Dendritic cell treated with granulocyte-macrophage colony-stimulating factor and Interleukin-4, amounts not matched to agents 40 ng/mL and 50 ng/mL, for 4 days (primary cell): ENCODE measurements at regions of chr17 and their contacts with region 1.

Region 1: GRCh38 chr17:44919885-44920564 is 4.7 kb upstream of the GFAP start:
- H3K4me3 Mint-ChIP-seq: no peak overlapping the region
- H3K27ac Mint-ChIP-seq: no peak overlapping the region
- H3K4me1 Mint-ChIP-seq: peaks cover 18% of the 10 kb centered on the region
- H3K27me3 Mint-ChIP-seq: peaks cover 29% of the 10 kb centered on the region

Region 2: GRCh38 chr17:45021607-45022287 is 101.7 kb after region 1 on chr17:
- intact Hi-C with region 1: loop called (anchors 1 kb)
- H3K4me3 Mint-ChIP-seq: peak overlapping the region; percentile 69
- H3K27ac Mint-ChIP-seq: peak overlapping the region; percentile 46
- H3K4me1 Mint-ChIP-seq: peaks cover 35% of the 10 kb centered on the region
- H3K27me3 Mint-ChIP-seq: peaks cover 43% of the 10 kb centered on the region

Region 3: DNA sequence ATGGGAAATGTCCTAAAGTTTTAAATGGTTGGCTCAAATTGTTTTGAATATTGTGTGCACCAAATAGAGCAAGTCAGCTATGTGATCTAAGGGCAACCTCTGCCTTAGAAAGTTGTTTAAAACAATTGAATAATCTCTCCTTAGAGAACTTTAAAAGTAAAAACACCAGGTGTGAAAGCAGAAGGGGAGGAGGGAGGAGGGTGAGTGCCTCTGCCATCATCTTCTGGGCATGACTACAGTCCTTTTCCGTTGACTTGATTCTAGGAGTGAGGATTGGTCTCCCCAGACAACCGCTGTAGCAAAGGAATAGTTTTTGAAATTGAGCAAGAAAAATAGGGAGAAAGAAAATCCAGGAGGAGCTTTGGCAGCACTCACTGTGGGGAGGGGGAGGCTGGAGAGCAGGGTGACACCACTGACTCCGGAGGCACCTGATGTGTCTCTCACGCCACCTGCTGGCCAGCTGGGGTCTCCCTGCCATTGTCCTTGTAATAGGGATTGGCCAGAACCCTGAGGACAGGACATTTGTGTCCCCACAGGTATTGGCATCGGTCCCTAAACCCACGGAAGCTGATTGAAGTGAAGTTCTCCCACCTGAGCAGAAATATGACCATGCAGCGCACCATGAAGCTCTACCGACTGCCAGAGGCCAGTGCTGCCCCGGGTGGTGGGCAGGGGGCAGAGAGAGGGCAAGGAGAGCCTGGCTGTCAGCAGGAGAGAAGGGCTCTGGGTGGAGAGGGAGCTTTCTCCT is 179.0 kb after region 1 on chr17:
- intact Hi-C with region 1: loop called (anchors 10 kb)
- H3K4me3 Mint-ChIP-seq: no peak overlapping the region
- H3K27ac Mint-ChIP-seq: no peak overlapping the region
- H3K4me1 Mint-ChIP-seq: no peaks in the 10 kb centered on the region
- H3K27me3 Mint-ChIP-seq: no peaks in the 10 kb centered on the region

Region 4: GRCh38 chr17:45135192-45135977 is 215.4 kb after region 1 on chr17 and contains the start of gene ACBD4:
- intact Hi-C with region 1: loop called (anchors 10 kb)
- H3K4me3 Mint-ChIP-seq: peak within 1 kb of the TSS; percentile 87
- H3K27ac Mint-ChIP-seq: peak within 1 kb of the TSS; percentile 82
- H3K4me1 Mint-ChIP-seq: peaks cover 25% of the 10 kb centered on the region
- H3K27me3 Mint-ChIP-seq: peaks cover 15% of the 10 kb centered on the region